Sciatic nerve (tissue), 2 donors: ENCODE measurements at regions of chr2 and their contacts with region 1.

Region 1: GRCh38 chr2:47767880-47768609 is 14.9 kb upstream of the MSH6 start:
- DNase-seq: peak; percentile 82
- ATAC-seq: peak; percentile 90

Region 2: DNA sequence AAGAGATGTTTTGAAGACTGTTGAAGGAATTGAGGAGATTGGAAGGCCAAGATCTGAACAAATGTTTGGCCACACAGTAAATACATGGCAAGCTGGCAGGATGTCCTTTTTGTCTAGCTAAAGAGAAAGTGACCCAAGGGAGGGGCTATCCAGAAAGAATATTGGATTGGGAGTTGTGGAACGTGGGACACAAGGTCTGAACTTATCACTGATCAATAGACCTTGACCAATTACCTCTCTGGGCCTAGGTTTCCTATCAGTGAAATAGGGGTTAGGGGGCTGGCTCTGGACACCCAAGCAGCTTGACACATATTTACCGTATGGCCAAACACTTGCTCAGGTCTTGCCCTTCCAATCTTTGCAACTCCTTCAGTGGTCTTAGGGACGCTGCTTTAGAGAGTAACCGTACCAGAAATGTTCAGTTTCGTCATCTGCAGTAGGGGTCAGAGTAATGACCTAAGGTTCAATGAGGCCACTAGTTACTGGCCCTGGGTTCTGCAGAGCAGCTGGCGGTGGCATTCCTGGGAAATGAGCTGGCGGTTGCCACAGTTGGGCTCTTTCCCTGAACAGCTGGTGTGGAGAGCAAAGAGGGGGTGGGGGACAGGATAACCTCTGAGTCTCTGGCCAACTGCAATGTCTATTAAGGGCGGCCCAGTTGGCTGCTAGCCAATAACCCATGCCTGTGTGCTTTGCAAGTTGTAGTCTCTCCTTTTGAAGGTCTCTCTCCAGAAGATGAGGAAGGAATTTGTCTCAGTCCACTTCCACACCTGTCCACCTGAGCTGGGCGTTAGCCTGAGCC is 542.8 kb before region 1 on chr2:
- intact Hi-C with region 1: no loop called
- DNase-seq: peak; percentile 71
- ATAC-seq: peak; percentile 75

Region 3: DNA sequence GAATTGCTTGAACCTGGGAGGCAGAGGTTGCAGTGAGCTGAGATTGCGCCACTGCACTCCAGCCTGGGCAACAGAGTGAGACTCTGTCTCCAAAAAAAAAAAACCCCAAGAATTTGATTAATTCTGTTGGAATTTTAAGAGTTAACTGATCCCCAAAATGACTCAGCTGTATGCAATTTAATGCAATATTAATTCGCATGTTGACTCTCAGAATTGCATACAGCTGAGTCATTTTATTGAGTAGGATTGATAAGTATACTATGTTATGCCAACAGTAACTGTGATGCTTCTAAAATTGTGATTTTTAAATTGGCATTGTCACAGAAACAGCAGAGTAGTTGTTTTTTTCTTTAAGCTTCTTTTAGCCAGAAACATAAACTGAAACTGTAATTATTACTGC is 345.5 kb before region 1 on chr2:
- intact Hi-C with region 1: no loop called
- DNase-seq: no peak
- ATAC-seq: no peak

Region 4: GRCh38 chr2:47437287-47437686 is 330.8 kb before region 1 on chr2:
- intact Hi-C with region 1: loop called (anchors 5 kb)
- DNase-seq: no peak
- ATAC-seq: peak; percentile 62

Region 5: GRCh38 chr2:48566592-48567255 is 798.7 kb after region 1 on chr2:
- intact Hi-C with region 1: no loop called
- DNase-seq: no peak
- ATAC-seq: peak; percentile 57